ENCODE measurements at regions of chr1 and their contacts with region 1.

Region 1: GRCh38 chr1:23367791-23368561 is 1.7 kb downstream of the ZNF436 start:
- DNase-seq: peak; percentile 98
- ATAC-seq: peak; percentile 87
- H3K4me3 ChIP-seq: peak overlapping the region; percentile 93 to 100 (median 97)
- H3K4me3 Mint-ChIP-seq: peak overlapping the region; percentile 98
- H3K27ac ChIP-seq: peak overlapping the region; percentile 81 to 85
- H3K27ac Mint-ChIP-seq: peak overlapping the region; percentile 99
- H3K4me1 ChIP-seq: peaks cover 12 to 19% of the 10 kb centered on the region in 2 donors
- H3K4me1 Mint-ChIP-seq: peaks cover 33% of the 10 kb centered on the region
- H3K27me3 ChIP-seq: no peaks in the 10 kb centered on the region
- H3K27me3 Mint-ChIP-seq: no peaks in the 10 kb centered on the region
- CTCF ChIP-seq: no peak

Region 2: DNA sequence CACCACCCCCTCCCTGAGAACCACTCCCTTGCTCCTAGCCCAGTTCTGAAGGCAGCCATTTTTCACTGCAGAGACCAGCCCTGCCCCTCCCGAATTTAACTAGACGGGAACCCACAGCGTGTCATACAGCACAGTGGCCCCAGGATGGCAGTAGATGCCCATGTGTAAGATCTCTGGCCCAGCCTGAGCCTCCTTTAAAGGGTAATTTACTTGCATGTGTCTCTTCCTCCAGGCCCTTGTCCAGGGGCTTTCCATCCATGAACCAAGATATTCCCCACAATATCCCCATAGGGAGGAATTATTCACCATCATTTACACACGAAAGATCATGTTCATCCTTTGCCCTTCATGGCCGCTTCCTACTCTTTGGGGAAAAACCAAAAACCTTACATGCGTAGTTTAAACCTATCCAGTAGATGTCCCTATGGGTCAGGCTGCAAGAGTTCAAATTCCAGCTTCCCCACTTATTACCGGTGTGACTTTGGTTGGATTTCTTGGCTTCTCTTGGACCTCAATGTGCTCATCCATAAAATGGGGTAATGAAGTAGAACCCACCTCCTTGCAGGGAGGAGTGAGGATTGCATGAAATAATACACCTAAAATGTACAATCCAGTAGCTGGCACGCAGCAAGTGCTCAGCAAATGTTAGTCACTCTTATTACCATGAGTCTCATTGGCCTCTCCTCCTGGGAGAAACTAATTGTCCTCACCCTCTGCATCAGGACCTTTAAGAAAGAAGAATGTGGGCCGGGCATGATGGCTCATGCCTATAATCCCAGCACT is 391.3 kb before region 1 on chr1:
- CTCF ChIA-PET with region 1: no interaction called
- POLR2A ChIA-PET with region 1: no interaction called
- intact Hi-C with region 1: no loop called
- DNase-seq: peak; percentile 59
- ATAC-seq: peak; percentile 84
- H3K4me3 ChIP-seq: no peak overlapping the region
- H3K4me3 Mint-ChIP-seq: no peak overlapping the region
- H3K27ac ChIP-seq: no peak overlapping the region
- H3K27ac Mint-ChIP-seq: no peak overlapping the region
- H3K4me1 ChIP-seq: no peaks in the 10 kb centered on the region
- H3K4me1 Mint-ChIP-seq: no peaks in the 10 kb centered on the region
- H3K27me3 ChIP-seq: peaks cover 0 to 8% (median 0%) of the 10 kb centered on the region in 4 experiments
- H3K27me3 Mint-ChIP-seq: peaks cover 34% of the 10 kb centered on the region
- CTCF ChIP-seq: peak; percentile 71

Region 3: GRCh38 chr1:23344111-23344986 is 23.6 kb before region 1 on chr1 and contains the start of gene HNRNPR:
- CTCF ChIA-PET with region 1: interaction called, 12 read pairs
- POLR2A ChIA-PET with region 1: interaction called, 53 read pairs
- intact Hi-C with region 1: loop called (anchors 1 kb)
- DNase-seq: peak; percentile 99
- ATAC-seq: peak; percentile 94
- H3K4me3 ChIP-seq: peak within 1 kb of the TSS; percentile 78 to 92 (median 87)
- H3K4me3 Mint-ChIP-seq: peak within 1 kb of the TSS; percentile 96
- H3K27ac ChIP-seq: peak within 1 kb of the TSS; percentile 65 to 92
- H3K27ac Mint-ChIP-seq: peak within 1 kb of the TSS; percentile 97
- H3K4me1 ChIP-seq: peaks cover 24 to 40% of the 10 kb centered on the region in 2 donors
- H3K4me1 Mint-ChIP-seq: peaks cover 41% of the 10 kb centered on the region
- H3K27me3 ChIP-seq: no peaks in the 10 kb centered on the region
- H3K27me3 Mint-ChIP-seq: no peaks in the 10 kb centered on the region
- CTCF ChIP-seq: peak; percentile 10
- total RNA-seq, gene HNRNPR: 132 and 142 TPM in 2 replicates

Region 4: DNA sequence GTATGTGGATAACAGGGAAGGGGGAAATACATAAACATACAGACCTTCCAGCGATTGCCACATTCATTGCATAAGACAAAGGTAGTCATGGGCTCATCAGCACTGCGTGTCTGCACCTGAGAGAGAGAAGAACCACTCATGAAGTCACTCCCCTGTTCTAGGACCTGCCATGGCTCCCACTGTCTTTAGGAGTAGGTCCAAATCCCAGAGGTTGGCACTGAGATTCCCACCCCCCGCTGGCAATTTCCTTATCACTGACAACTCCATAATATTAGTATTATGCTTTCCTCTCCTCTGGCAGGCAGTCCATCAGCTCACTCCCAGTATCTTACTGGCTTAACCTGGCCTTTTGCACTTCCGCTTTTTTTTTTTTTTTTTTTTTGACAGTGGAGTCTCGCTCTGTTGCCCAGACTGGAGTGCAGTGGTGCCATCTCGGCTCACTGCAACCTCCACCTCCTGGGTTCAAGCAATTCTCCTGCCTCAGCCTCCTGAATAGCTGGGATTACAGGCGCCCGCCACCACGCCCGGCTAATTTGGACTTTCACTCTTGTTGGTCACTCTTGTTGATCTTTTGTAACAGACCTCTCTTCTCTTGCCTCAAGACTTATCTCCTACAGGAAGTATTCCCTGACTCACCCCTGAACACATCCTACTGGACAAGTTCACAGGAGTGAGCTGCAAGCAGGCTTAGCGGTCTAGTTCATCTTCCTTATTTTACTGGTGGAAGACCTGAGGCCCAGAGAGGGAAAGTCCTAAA is 16.5 kb after region 1 on chr1:
- CTCF ChIA-PET with region 1: no interaction called
- POLR2A ChIA-PET with region 1: no interaction called
- intact Hi-C with region 1: no loop called
- DNase-seq: no peak
- ATAC-seq: no peak
- H3K4me3 ChIP-seq: no peak overlapping the region
- H3K4me3 Mint-ChIP-seq: no peak overlapping the region
- H3K27ac ChIP-seq: no peak overlapping the region
- H3K27ac Mint-ChIP-seq: no peak overlapping the region
- H3K4me1 ChIP-seq: no peaks in the 10 kb centered on the region
- H3K4me1 Mint-ChIP-seq: peaks cover 5% of the 10 kb centered on the region
- H3K27me3 ChIP-seq: peaks cover 0 to 2% (median 0%) of the 10 kb centered on the region in 4 experiments
- H3K27me3 Mint-ChIP-seq: peaks cover 7% of the 10 kb centered on the region
- CTCF ChIP-seq: no peak

Region 5: GRCh38 chr1:23530747-23531561 is 163.0 kb after region 1 on chr1 and contains the start of gene E2F2:
- CTCF ChIA-PET with region 1: no interaction called
- POLR2A ChIA-PET with region 1: no interaction called
- intact Hi-C with region 1: loop called (anchors 2 kb)
- DNase-seq: peak; percentile 91
- ATAC-seq: peak; percentile 83
- H3K4me3 ChIP-seq: peak within 1 kb of the TSS; percentile 40 to 71 (median 63)
- H3K4me3 Mint-ChIP-seq: peak within 1 kb of the TSS; percentile 85
- H3K27ac ChIP-seq: no peak within 1 kb of the TSS
- H3K27ac Mint-ChIP-seq: peak within 1 kb of the TSS; percentile 61
- H3K4me1 ChIP-seq: peaks cover 69 to 75% of the 10 kb centered on the region in 2 donors
- H3K4me1 Mint-ChIP-seq: peaks cover 79% of the 10 kb centered on the region
- H3K27me3 ChIP-seq: peaks cover 0 to 7% (median 0%) of the 10 kb centered on the region in 4 experiments
- H3K27me3 Mint-ChIP-seq: no peaks in the 10 kb centered on the region
- CTCF ChIP-seq: no peak
- total RNA-seq, gene E2F2: 1.2 and 3.2 TPM in 2 replicates